GM12878 (cell line): ENCODE measurements at regions of chr11 and their contacts with region 1.

Region 1: GRCh38 chr11:84780689-84781293 is 846.4 kb downstream of the DLG2 start:
- DNase-seq: no peak
- ATAC-seq: peak; percentile 42; the same call in 2 of the 3 replicates
- H3K4me3 ChIP-seq: no peak overlapping the region
- H3K27ac ChIP-seq: no peak overlapping the region
- H3K4me1 ChIP-seq: no peaks in the 10 kb centered on the region
- H3K27me3 ChIP-seq: no peaks in the 10 kb centered on the region
- CTCF ChIP-seq: peak; percentile 35 to 44 (median 36); a peak in 5 of 6 replicates
- EP300 ChIP-seq: no peak
- POLR2A ChIP-seq: no peak
- RAD21 ChIP-seq: peak; percentile 52

Region 2: DNA sequence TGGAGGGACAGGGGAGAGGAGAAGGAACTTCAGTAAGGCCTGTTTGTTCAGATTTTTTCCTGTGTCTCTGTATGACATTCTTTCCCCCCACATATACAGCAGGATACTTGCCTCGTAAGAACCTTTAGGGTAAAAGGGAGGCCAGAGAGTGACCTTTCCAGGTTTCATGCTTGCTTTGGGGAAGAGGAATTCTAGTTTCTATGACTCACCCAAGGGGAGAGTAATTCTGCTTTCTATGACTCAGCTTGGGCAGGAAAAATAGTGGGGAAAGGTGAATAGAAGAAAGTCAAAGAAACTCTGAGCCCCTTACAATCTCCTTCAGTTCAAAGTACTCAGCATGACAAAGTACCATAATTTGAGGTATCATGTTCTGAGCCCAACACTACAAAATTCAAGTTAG is 389.4 kb after region 1 on chr11:
- CTCF ChIA-PET with region 1: interaction called, 4 read pairs
- POLR2A ChIA-PET with region 1: no interaction called
- RAD21 ChIA-PET with region 1: interaction called, 7 read pairs
- SMC1A ChIA-PET with region 1: interaction called, 4 read pairs
- in situ Hi-C with region 1: no loop called
- intact Hi-C with region 1: loop called (anchors 10 kb)
- DNase-seq: no peak
- ATAC-seq: no peak
- H3K4me3 ChIP-seq: no peak overlapping the region
- H3K27ac ChIP-seq: no peak overlapping the region
- H3K4me1 ChIP-seq: no peaks in the 10 kb centered on the region
- H3K27me3 ChIP-seq: no peaks in the 10 kb centered on the region
- CTCF ChIP-seq: no peak
- EP300 ChIP-seq: no peak
- POLR2A ChIP-seq: no peak
- RAD21 ChIP-seq: no peak

Region 3: DNA sequence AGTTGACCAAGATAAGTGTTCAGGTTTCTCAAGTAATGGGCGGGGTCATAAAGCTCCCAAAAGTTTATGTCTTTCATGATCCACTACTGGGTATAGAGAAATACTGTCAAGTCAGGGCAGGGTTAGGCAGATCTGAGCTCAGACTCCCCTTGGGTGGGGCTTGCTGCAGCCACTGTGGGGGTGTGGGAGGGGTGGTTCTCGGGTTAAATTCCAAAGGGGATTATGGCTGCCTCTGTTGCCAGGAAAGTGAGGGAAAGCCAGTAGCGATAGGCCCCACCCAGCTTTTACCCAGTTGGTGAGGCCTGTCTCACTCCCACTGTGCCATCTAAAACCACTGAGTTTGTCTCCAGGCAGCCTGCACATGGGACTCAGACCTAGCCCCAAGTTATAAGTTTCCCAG is 808.6 kb after region 1 on chr11:
- CTCF ChIA-PET with region 1: interaction called, 7 read pairs
- POLR2A ChIA-PET with region 1: no interaction called
- RAD21 ChIA-PET with region 1: interaction called, 7 read pairs
- SMC1A ChIA-PET with region 1: interaction called, 5 read pairs
- in situ Hi-C with region 1: loop called (anchors 10 kb)
- intact Hi-C with region 1: loop called (anchors 2 kb)
- DNase-seq: no peak
- ATAC-seq: no peak
- H3K4me3 ChIP-seq: no peak overlapping the region
- H3K27ac ChIP-seq: no peak overlapping the region
- H3K4me1 ChIP-seq: no peaks in the 10 kb centered on the region
- H3K27me3 ChIP-seq: no peaks in the 10 kb centered on the region
- CTCF ChIP-seq: no peak
- EP300 ChIP-seq: no peak
- POLR2A ChIP-seq: no peak
- RAD21 ChIP-seq: no peak